PC-9 (cell line): ENCODE measurements at regions of chr12 and their contacts with region 1.

Region 1: GRCh38 chr12:109154451-109155438 is 38.4 kb downstream of the ACACB start:
- DNase-seq: peak; percentile 77 to 85
- H3K4me3 ChIP-seq: peak overlapping the region; percentile 61
- H3K27ac ChIP-seq: no peak overlapping the region
- H3K4me1 ChIP-seq: 0 out of 2 replicates have a peak, but pooled peaks cover 5% of the 10 kb centered on the region
- H3K27me3 ChIP-seq: peaks cover 7% of the 10 kb centered on the region; the same call in 1 of the 2 replicates
- CTCF ChIP-seq: no peak

Region 2: DNA sequence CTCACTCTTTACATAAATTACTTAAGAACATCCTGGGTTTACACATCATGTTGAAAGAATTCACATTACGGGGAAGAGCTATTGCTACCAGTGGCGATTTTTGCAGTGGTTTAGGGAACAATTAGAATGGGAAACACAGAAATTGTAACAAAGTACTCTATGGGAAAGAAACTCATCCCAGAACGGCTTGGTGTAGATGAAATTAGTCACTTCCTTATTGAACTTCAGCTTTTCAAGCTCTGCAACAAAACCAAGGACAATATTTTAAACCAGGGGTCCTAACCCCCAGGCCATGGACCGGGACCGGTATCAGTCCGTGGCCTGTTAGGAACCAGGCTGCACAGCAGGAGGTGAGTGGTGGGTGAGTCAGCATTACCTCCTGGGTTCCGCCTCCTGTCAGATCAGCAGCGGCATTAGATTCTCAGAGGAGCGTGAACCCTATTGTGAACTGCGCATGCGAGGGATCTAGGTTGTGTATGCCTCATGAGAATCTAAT is 672.0 kb before region 1 on chr12:
- CTCF ChIA-PET with region 1: interaction called, 12 read pairs
- POLR2A ChIA-PET with region 1: no interaction called
- intact Hi-C with region 1: no loop called
- DNase-seq: peak in 1 of 2 experiments; percentile 17
- H3K4me3 ChIP-seq: no peak overlapping the region
- H3K27ac ChIP-seq: no peak overlapping the region
- H3K4me1 ChIP-seq: no peaks in the 10 kb centered on the region
- H3K27me3 ChIP-seq: peaks cover 60% of the 10 kb centered on the region
- CTCF ChIP-seq: no peak

Region 3: DNA sequence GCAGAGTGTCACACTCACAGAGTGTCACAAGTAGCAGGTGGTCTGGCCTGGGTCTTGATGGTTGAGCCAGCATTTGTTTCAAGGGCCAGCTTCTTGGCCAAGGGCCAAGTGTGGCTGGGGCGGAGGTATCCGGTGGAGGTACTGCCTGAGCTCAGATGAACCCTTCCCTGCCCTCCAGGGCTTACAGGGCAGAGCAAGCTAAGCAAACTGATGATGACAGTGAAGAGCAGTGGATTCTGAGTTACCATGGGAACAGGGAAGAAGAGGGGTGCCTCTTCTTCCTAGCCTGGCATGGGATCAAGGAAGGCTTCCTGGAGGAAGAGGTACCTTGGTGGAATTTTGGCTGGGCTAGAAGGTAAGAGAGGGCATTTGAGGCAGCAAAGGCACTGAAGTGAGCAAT is 454.6 kb after region 1 on chr12:
- CTCF ChIA-PET with region 1: no interaction called
- POLR2A ChIA-PET with region 1: interaction called, 10 read pairs
- intact Hi-C with region 1: no loop called
- DNase-seq: no peak
- H3K4me3 ChIP-seq: no peak overlapping the region
- H3K27ac ChIP-seq: no peak overlapping the region
- H3K4me1 ChIP-seq: no peaks in the 10 kb centered on the region
- H3K27me3 ChIP-seq: peaks cover 32% of the 10 kb centered on the region
- CTCF ChIP-seq: no peak